Aorta (tissue), 5 donors: ENCODE measurements at regions of chr11 and their contacts with region 1.

Region 1: GRCh38 chr11:114197799-114198500 is 98.2 kb upstream of the NNMT start:
- DNase-seq: peak; percentile 78 to 89
- ATAC-seq: peak; percentile 80
- H3K4me3 ChIP-seq: no peak overlapping the region
- H3K27ac ChIP-seq: peak overlapping the region; percentile 98 to 99
- H3K4me1 ChIP-seq: peaks cover 6 to 11% of the 10 kb centered on the region in 2 donors
- H3K27me3 ChIP-seq: no peaks in the 10 kb centered on the region

Region 2: DNA sequence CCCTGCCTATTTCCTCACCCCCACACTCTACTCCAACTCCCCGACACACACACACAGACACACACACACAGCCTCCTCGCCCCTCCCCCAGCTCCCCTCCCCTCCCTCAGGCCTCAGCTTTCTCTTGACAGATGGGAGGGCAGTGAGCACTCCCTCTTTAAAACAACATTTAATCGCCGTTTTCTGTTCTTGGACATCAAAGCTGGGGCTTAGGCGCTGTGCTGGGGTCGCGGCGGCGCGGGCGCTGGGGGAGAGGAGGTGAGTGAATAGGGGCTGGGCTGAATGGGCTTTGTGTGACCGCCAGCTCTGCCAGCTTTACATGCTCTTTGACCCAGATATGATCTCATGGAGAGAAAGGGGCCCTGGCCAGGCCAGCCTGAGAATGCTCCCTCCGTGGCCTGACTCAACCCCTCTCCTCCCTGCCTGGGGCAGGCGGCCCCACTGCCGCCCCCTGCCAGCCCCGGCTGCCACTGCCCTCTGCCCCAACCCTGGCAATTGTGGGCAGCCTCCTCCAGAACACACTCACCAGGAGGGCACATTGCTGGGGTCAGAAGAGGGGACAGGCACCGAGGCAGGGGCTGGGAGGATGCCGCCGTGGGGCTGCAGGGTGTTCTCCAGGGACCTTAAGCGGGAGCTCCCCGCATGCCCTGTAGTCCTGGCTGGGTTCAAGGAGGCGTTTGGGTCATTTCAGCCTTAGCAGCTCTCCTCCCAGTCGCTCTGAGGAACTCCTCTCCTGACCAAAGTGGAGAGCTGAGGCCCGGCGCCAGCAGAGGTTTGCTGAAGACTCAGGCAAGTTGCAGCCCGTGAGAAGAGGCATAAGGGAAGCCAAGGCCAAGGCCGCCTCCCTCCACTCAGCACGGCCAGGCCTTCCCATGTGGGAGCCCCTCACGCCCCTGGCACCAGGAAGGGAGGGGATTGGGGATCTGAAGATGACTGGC is 59.9 kb after region 1 on chr11:
- intact Hi-C with region 1: loop called in 1 of 2 experiments (anchors 5 kb)
- DNase-seq: peak; percentile 66 to 87
- ATAC-seq: peak; percentile 47
- H3K4me3 ChIP-seq: no peak overlapping the region
- H3K27ac ChIP-seq: peak overlapping the region; percentile 45 to 68
- H3K4me1 ChIP-seq: peaks cover 0 to 8% of the 10 kb centered on the region in 2 donors
- H3K27me3 ChIP-seq: no peaks in the 10 kb centered on the region